AG04449 (cell line): ENCODE measurements at regions of chr5 and their contacts with region 1.

Region 1: DNA sequence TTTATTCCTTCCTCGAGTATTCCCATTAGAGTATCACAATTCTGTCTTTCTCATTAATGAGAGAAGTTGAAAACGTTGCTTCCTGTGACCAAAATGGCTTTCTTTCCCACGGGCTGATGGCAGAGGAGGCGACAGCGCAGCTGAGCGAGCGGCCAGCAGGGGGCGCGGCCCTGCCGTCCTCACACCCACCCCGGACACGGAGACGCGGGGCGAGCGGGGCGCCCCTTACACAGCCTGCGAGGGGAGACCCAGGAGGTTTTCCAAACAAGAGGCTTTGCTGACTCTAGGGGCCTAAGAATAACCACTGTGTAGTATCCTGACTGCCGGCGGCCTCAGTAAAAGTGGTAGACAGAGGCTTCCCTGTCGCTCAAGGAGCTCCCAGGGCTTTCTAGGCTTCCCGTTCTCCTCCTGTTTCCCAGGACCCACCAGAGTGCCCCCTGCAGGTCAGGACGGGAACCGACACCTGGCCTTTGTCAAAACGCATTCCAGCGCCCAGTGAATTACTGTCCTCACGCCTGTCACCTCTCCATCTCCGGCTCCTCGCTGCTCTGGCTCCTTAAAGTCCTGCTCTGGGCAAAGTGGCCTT is 27.3 kb upstream of the FGF1 start:
- DNase-seq: no peak
- H3K4me3 ChIP-seq: peak overlapping the region; percentile 75
- CTCF ChIP-seq: peak; percentile 98

Region 2: DNA sequence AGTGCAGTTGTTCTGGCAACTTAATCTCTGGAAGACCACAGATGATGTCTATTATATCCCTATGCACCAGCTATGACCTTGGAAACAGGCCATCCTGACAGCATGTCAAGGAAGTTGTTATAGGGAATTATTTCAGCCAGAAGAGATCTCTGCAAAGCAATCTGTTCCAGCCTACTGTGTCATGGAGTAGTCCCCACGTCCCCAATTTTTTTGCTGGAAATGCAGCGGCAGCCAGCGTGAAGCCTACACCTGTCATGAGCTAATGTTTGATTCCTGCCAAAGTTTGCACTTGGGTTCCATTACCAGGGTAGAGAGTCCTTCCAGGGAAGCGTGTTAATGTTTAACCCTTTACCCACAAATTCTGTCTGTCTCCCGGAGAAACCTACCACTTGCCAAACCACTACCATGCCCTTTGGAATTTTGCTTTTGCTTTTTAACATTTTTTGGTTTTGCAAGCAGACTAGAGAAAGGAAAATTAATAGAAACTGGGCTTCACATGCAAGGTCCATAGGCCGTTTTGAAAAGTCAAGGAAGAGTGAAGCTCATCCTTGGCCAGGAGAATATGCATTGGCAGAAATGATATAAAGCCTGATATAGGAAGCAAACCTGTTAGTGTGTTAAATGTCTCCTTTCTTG is 213.5 kb before region 1 on chr5:
- CTCF ChIA-PET with region 1: no interaction called
- POLR2A ChIA-PET with region 1: no interaction called
- DNase-seq: no peak
- H3K4me3 ChIP-seq: no peak overlapping the region
- CTCF ChIP-seq: no peak

Region 3: GRCh38 chr5:142627383-142628255 is 85.6 kb before region 1 on chr5:
- CTCF ChIA-PET with region 1: interaction called, 15 read pairs
- POLR2A ChIA-PET with region 1: no interaction called
- DNase-seq: no peak
- H3K4me3 ChIP-seq: no peak overlapping the region
- CTCF ChIP-seq: no peak

Region 4: DNA sequence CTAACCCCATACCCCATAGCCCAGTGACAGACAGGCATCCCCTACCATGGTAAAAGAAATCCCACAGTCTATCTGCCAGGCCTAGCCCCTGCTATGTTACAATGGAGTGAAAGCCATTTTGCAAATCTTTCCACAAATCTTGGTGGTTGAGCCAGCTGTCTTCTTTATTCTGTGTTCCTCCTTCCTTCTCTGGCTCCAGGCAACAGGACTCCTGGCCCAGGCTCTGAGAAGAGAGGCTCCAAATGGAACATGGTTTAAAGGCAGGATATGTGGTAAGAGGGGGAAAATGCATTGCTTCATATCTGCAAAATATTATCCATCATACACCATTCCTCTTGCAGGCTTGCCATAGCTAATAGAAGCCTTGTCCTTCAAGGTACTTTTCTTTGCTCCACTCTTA is 52.5 kb before region 1 on chr5:
- CTCF ChIA-PET with region 1: interaction called, 172 read pairs
- POLR2A ChIA-PET with region 1: no interaction called
- DNase-seq: no peak
- H3K4me3 ChIP-seq: no peak overlapping the region
- CTCF ChIP-seq: no peak

Region 5: DNA sequence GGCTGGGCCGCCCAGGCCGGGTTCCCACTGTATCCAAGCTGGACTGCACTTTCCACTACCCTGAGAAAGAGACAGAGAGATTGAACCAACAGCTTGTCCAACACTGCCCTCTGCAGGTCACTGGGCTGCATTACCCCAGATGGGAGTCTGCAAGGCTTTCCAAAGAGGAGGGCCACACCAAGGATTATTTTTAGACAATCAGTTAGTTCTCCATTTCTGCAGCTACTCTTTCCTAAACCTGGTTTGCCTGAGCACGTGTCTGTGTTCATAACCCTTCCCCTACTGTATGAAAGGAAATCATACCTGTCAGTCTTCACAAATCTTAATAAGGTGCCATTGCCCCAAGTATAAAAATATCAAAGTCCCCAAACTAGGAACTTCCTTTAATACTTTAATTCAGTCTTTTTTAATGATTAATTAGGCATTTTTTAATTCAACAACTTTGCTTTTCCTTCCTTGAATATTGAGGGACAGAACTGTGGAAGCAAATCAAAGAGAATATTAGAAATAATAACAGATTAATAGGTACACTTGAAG is 14.0 kb before region 1 on chr5:
- CTCF ChIA-PET with region 1: interaction called, 238 read pairs
- POLR2A ChIA-PET with region 1: no interaction called
- DNase-seq: no peak
- H3K4me3 ChIP-seq: no peak overlapping the region
- CTCF ChIP-seq: peak; percentile 87

Region 6: GRCh38 chr5:142783601-142784341 is 70.6 kb after region 1 on chr5:
- CTCF ChIA-PET with region 1: interaction called, 20 read pairs
- POLR2A ChIA-PET with region 1: no interaction called
- DNase-seq: no peak
- H3K4me3 ChIP-seq: no peak overlapping the region
- CTCF ChIP-seq: no peak

Region 7: GRCh38 chr5:142888469-142889085 is 175.4 kb after region 1 on chr5:
- CTCF ChIA-PET with region 1: interaction called, 2,759 read pairs
- POLR2A ChIA-PET with region 1: interaction called, 4 read pairs
- DNase-seq: no peak
- H3K4me3 ChIP-seq: no peak overlapping the region
- CTCF ChIP-seq: peak; percentile 45

Region 8: GRCh38 chr5:143213851-143214363 is 500.7 kb after region 1 on chr5:
- CTCF ChIA-PET with region 1: no interaction called
- POLR2A ChIA-PET with region 1: no interaction called
- DNase-seq: no peak
- H3K4me3 ChIP-seq: no peak overlapping the region
- CTCF ChIP-seq: no peak